Psoas muscle (tissue), 8 donors: ENCODE measurements at regions of chr17 and their contacts with region 1.

Region 1: GRCh38 chr17:37520174-37520573 is 30.5 kb downstream of the DUSP14 start:
- DNase-seq: no peak
- ATAC-seq: no peak
- H3K4me3 ChIP-seq: no peak overlapping the region
- H3K27ac ChIP-seq: no peak overlapping the region
- H3K4me1 ChIP-seq: no peaks in the 10 kb centered on the region
- H3K27me3 ChIP-seq: no peaks in the 10 kb centered on the region
- CTCF ChIP-seq: no peak

Region 2: GRCh38 chr17:37465069-37465616 is 55.0 kb before region 1 on chr17:
- intact Hi-C with region 1: loop called in 1 of 2 experiments (anchors 5 kb)
- DNase-seq: no peak
- ATAC-seq: no peak
- H3K4me3 ChIP-seq: no peak overlapping the region
- H3K27ac ChIP-seq: no peak overlapping the region
- H3K4me1 ChIP-seq: no peaks in the 10 kb centered on the region
- H3K27me3 ChIP-seq: no peaks in the 10 kb centered on the region
- CTCF ChIP-seq: no peak

Region 3: GRCh38 chr17:37493249-37494027 is 26.7 kb before region 1 on chr17:
- intact Hi-C with region 1: no loop called
- DNase-seq: no peak
- ATAC-seq: no peak
- H3K4me3 ChIP-seq: no peak overlapping the region
- H3K27ac ChIP-seq: no peak overlapping the region
- H3K4me1 ChIP-seq: peaks cover 22% of the 10 kb centered on the region
- H3K27me3 ChIP-seq: no peaks in the 10 kb centered on the region
- CTCF ChIP-seq: no peak

Region 4: DNA sequence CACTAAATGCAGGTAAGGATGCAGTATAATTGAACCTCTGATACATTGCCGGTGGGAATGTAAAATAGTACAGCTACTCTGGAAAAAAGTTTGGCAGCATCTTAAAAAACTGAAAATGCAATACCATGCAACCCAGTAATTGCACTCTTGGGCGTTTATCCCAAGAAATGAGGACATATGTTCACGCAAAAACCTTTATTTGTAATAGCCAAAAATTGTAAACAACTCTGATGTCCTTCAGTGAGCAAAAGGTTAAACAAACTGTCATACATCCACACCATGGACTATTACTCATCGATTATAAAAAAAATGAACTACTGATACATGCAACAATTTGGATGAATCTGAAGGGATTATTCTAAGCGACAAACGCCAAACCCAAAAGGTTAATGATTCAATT is 72.1 kb after region 1 on chr17:
- intact Hi-C with region 1: loop called in 1 of 2 experiments (anchors 5 kb)
- DNase-seq: no peak
- ATAC-seq: peak in 1 of 4 donors; percentile 30
- H3K4me3 ChIP-seq: no peak overlapping the region
- H3K27ac ChIP-seq: no peak overlapping the region
- H3K4me1 ChIP-seq: no peaks in the 10 kb centered on the region
- H3K27me3 ChIP-seq: no peaks in the 10 kb centered on the region
- CTCF ChIP-seq: no peak